ENCODE measurements at regions of chr5 and their contacts with region 1.

Region 1: DNA sequence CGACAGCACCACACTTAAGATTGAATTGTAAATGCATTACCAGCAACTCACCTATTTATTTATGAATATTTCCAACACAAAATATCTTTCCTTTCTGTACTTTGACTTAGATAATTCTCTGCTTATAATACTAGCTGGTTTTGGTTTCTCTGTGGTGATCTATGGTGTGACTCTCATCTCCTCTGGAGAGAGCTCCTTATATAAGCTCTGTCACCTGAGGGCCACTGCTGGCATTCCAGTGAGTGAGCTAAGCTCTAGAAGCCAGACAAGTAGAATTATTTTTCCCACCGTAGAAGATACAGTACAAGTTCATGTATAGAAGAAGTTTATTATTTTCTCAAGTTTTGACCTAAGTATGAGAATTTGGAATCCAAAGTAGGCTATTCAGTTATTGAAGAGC is 111.5 kb downstream of the CDC42SE2 start:
- DNase-seq: peak in 4 of 5 donors; percentile 41 to 76 (median 48)
- H3K4me3 ChIP-seq: no peak overlapping the region
- H3K4me3 Mint-ChIP-seq: peak overlapping the region; percentile 11 to 74 (median 44)
- H3K27ac ChIP-seq: peak overlapping the region; percentile 66
- H3K27ac Mint-ChIP-seq: peak overlapping the region; percentile 89 to 99 (median 97)
- H3K4me1 ChIP-seq: peaks cover 100% of the 10 kb centered on the region
- H3K4me1 Mint-ChIP-seq: peaks cover 64 to 96% (median 82%) of the 10 kb centered on the region in 4 donors
- H3K27me3 ChIP-seq: no peaks in the 10 kb centered on the region
- H3K27me3 Mint-ChIP-seq: no peaks in the 10 kb centered on the region

Region 2: GRCh38 chr5:130270786-130271185 is 1104.6 kb before region 1 on chr5:
- CTCF ChIA-PET with region 1: no interaction called
- POLR2A ChIA-PET with region 1: no interaction called
- intact Hi-C with region 1: no loop called
- DNase-seq: no peak
- H3K4me3 ChIP-seq: no peak overlapping the region
- H3K4me3 Mint-ChIP-seq: no peak overlapping the region
- H3K27ac ChIP-seq: no peak overlapping the region
- H3K27ac Mint-ChIP-seq: no peak overlapping the region
- H3K4me1 ChIP-seq: no peaks in the 10 kb centered on the region
- H3K4me1 Mint-ChIP-seq: no peaks in the 10 kb centered on the region
- H3K27me3 ChIP-seq: no peaks in the 10 kb centered on the region
- H3K27me3 Mint-ChIP-seq: no peaks in the 10 kb centered on the region

Region 3: GRCh38 chr5:131364507-131365050 is 10.8 kb before region 1 on chr5:
- CTCF ChIA-PET with region 1: interaction called, 10 read pairs
- POLR2A ChIA-PET with region 1: interaction called, 36 read pairs
- intact Hi-C with region 1: loop called (anchors 1 kb)
- DNase-seq: peak in 3 of 5 donors; percentile 43 to 50 (median 48)
- H3K4me3 ChIP-seq: no peak overlapping the region
- H3K4me3 Mint-ChIP-seq: peak overlapping the region; percentile 14 to 73 (median 58)
- H3K27ac ChIP-seq: peak overlapping the region; percentile 4
- H3K27ac Mint-ChIP-seq: peak overlapping the region; percentile 56 to 97 (median 79)
- H3K4me1 ChIP-seq: peaks cover 86% of the 10 kb centered on the region
- H3K4me1 Mint-ChIP-seq: peaks cover 51 to 89% (median 72%) of the 10 kb centered on the region in 4 donors
- H3K27me3 ChIP-seq: no peaks in the 10 kb centered on the region
- H3K27me3 Mint-ChIP-seq: no peaks in the 10 kb centered on the region

Region 4: GRCh38 chr5:131661931-131662330 is 286.6 kb after region 1 on chr5:
- CTCF ChIA-PET with region 1: no interaction called
- POLR2A ChIA-PET with region 1: no interaction called
- intact Hi-C with region 1: no loop called
- DNase-seq: no peak
- H3K4me3 ChIP-seq: no peak overlapping the region
- H3K4me3 Mint-ChIP-seq: no peak overlapping the region
- H3K27ac ChIP-seq: no peak overlapping the region
- H3K27ac Mint-ChIP-seq: no peak overlapping the region
- H3K4me1 ChIP-seq: no peaks in the 10 kb centered on the region
- H3K4me1 Mint-ChIP-seq: peaks cover 0 to 8% (median 0%) of the 10 kb centered on the region in 4 donors
- H3K27me3 ChIP-seq: no peaks in the 10 kb centered on the region
- H3K27me3 Mint-ChIP-seq: no peaks in the 10 kb centered on the region

Region 5: DNA sequence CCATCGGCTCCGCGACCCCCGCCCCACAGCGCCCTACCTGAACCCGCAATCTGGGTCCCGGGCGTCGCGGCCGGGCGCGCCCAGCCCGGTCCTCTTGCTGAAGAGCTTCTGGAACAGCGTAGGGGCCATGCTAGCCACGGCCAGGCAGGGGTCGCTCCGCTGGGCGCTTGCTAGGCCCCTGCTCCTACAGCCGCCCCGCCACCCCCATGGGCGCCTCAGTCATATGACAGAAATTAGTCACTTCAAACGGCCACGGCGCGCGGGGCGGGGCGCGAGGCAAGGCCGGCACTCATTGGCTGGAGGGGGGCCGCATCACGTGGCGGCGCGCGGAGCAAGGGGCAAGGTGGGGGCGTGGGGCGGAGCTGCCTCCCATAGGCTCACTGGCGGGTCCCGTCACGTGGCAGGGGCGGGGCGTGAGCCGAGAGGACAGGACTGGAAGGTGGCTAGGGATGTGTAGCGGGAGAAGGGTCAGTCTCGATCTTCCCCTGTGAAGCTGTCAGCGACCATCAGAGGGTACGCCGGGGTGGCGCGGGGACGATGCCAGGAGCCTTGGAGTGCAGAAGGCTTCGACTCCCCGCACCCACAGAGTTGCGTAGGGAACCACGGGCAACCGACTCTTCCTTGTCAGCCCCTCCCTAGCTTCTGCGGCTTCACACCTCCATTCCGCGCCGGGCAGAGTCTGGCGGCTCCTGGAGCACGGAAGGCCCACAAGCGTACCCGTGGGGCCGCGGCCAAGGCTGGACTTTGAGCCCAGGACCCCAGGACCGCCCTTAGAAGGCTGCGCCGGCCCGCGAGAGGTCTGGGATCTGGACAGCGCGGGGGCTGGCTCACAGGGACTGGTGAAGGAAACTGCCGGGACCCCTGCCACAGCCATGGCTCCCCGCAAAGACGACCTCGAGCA is 421.7 kb after region 1 on chr5 and contains the start of gene FNIP1:
- CTCF ChIA-PET with region 1: no interaction called
- POLR2A ChIA-PET with region 1: no interaction called
- intact Hi-C with region 1: no loop called
- DNase-seq: peak; percentile 96 to 98 (median 97)
- H3K4me3 ChIP-seq: peak within 1 kb of the TSS; percentile 76 to 90
- H3K4me3 Mint-ChIP-seq: peak within 1 kb of the TSS; percentile 92 to 97 (median 96)
- H3K27ac ChIP-seq: peak within 1 kb of the TSS; percentile 96
- H3K27ac Mint-ChIP-seq: peak within 1 kb of the TSS; percentile 94 to 99 (median 98)
- H3K4me1 ChIP-seq: peaks cover 45% of the 10 kb centered on the region
- H3K4me1 Mint-ChIP-seq: peaks cover 19 to 43% (median 24%) of the 10 kb centered on the region in 4 donors
- H3K27me3 ChIP-seq: no peaks in the 10 kb centered on the region
- H3K27me3 Mint-ChIP-seq: no peaks in the 10 kb centered on the region
- total RNA-seq, gene FNIP1: 34.9 to 35.9 TPM